PC-9 (cell line): ENCODE measurements at regions of chr6 and their contacts with region 1.

Region 1: GRCh38 chr6:7541175-7542064 is at the start of gene DSP:
- DNase-seq: peak; percentile 65 to 96
- H3K4me3 ChIP-seq: peak within 1 kb of the TSS; percentile 81
- H3K27ac ChIP-seq: peak within 1 kb of the TSS; percentile 79
- H3K4me1 ChIP-seq: peaks cover 28% of the 10 kb centered on the region
- H3K27me3 ChIP-seq: no peaks in the 10 kb centered on the region
- CTCF ChIP-seq: no peak
- total RNA-seq, gene DSP: 109 and 117 TPM in 2 replicates

Region 2: DNA sequence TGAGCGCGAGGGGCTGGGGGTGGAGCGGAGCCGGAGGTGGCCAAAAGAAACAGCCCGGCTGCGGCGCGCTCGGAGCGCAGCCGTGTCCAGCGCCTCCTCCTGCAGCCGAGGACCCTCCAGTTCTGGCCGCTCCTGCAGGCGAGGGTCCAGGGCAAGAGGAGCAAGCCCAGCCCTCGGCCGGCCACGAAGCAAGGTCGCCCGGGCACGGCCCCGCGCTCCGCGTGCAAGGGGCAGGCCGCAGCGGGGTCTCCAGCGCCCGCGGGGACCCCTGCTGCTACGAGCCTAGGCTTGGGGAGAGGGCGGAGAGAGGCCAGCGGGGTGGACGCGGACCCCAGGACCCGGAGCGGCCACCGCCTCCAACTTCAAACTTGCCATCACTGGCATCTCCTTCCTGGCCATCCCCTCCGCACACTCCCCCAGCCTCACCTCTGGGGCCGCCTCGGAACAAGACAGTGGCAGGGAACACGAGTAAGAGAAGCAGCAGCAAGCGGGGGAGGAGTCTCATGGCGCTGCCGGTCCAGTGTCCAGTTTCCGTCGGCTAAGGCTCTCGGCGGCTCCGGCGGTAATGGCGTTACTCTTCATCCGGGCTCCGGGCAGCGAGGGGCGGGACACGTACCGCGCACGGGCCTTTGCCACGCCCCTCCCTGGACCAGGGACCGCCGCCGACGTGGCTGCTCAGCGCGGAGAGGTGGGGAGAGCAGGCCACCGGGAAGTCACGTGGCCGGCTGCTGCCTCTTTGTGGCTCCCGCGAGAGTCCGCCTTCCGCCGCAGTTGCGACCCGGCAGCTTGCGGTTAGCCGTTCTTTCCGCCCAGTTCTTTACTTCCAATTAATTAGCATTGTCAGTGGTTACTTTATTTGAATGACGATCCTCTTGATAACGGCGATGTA is 228.6 kb before region 1 on chr6 and contains the start of gene SSR1:
- CTCF ChIA-PET with region 1: no interaction called
- POLR2A ChIA-PET with region 1: interaction called, 4 read pairs
- intact Hi-C with region 1: loop called (anchors 2 kb)
- DNase-seq: peak; percentile 84 to 98
- H3K4me3 ChIP-seq: peak within 1 kb of the TSS; percentile 94
- H3K27ac ChIP-seq: peak within 1 kb of the TSS; percentile 97
- H3K4me1 ChIP-seq: peaks cover 22% of the 10 kb centered on the region
- H3K27me3 ChIP-seq: no peaks in the 10 kb centered on the region
- CTCF ChIP-seq: no peak
- total RNA-seq, gene SSR1: 104 and 118 TPM in 2 replicates

Region 3: DNA sequence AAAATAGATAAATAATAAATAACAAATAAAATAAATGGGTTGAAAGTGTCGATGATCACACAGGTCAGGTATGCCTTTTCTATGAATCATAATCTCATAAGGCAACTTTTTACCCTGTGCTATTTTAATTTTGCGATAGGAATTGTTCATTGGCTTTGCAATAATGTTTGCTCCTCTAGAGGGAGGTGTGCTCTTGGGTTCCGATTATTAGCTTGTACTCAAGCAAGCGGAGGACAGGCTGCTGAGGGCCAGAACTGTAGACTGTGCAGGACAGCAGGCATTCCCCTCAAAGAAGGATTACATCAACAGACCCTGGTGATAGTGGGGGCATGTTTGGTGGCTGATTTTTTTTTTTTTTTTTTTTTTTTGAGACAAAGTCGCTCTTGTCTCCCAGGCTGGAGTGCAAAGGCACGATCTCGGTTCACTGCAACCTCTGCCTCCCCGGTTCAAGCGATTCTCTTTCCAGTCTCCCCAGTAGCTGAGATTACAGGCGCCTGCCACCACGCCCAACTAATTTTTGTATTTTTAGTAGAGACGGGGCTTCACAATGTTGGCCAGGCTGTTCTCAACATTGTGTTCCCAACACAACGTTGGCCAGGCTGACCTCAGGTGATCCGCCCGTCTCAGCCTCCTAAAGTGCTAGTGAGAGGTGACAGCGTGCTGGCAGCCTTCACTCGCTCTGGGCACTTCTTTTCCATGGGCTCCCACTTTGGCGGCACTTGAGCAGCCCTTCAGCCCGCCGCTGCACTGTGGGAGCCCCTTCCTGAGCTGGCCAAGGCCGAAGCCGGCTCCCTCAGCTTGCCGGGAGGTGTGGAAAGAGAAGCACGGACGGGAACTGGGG is 116.2 kb before region 1 on chr6:
- CTCF ChIA-PET with region 1: interaction called, 13 read pairs
- POLR2A ChIA-PET with region 1: no interaction called
- intact Hi-C with region 1: loop called (anchors 1 kb)
- DNase-seq: peak; percentile 32 to 57
- H3K4me3 ChIP-seq: no peak overlapping the region
- H3K27ac ChIP-seq: no peak overlapping the region
- H3K4me1 ChIP-seq: no peaks in the 10 kb centered on the region
- H3K27me3 ChIP-seq: no peaks in the 10 kb centered on the region
- CTCF ChIP-seq: peak; percentile 61

Region 4: DNA sequence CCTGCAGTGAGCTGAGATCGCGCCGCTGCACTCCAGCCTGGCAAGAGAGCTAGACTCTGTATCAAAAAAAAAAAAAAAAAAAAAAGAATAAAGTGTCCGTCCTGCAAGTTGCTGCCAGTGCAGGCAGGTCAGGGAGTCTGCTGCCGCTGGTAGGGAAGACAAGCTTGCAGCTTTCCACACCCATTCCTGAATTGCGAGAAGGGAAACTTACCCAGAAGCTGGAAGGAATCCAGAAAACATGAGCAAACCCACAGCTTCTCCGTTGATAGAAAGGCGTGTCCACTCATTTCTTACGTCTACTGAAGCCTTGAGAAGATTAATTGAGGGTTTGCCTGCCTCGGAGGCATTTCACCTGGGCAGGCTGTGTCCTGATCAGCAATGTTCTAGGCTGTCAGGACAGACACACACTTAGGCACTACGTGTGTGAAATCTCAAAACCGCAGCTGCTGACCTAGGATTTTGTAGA is 61.6 kb before region 1 on chr6:
- CTCF ChIA-PET with region 1: no interaction called
- POLR2A ChIA-PET with region 1: interaction called, 18 read pairs
- intact Hi-C with region 1: loop called (anchors 1 kb)
- DNase-seq: peak; percentile 83 to 95
- H3K4me3 ChIP-seq: peak overlapping the region; percentile 37; the same call in 1 of the 2 replicates
- H3K27ac ChIP-seq: peak overlapping the region; percentile 35; the same call in 1 of the 2 replicates
- H3K4me1 ChIP-seq: no peaks in the 10 kb centered on the region
- H3K27me3 ChIP-seq: no peaks in the 10 kb centered on the region
- CTCF ChIP-seq: no peak

Region 5: GRCh38 chr6:7561153-7561964 is 19.9 kb after region 1 on chr6:
- CTCF ChIA-PET with region 1: interaction called, 10 read pairs
- POLR2A ChIA-PET with region 1: interaction called, 3 read pairs
- intact Hi-C with region 1: no loop called
- DNase-seq: no peak
- H3K4me3 ChIP-seq: no peak overlapping the region
- H3K27ac ChIP-seq: no peak overlapping the region
- H3K4me1 ChIP-seq: no peaks in the 10 kb centered on the region
- H3K27me3 ChIP-seq: no peaks in the 10 kb centered on the region
- CTCF ChIP-seq: no peak